ENCODE measurements at regions of chr12 and their contacts with region 1.

Region 1: DNA sequence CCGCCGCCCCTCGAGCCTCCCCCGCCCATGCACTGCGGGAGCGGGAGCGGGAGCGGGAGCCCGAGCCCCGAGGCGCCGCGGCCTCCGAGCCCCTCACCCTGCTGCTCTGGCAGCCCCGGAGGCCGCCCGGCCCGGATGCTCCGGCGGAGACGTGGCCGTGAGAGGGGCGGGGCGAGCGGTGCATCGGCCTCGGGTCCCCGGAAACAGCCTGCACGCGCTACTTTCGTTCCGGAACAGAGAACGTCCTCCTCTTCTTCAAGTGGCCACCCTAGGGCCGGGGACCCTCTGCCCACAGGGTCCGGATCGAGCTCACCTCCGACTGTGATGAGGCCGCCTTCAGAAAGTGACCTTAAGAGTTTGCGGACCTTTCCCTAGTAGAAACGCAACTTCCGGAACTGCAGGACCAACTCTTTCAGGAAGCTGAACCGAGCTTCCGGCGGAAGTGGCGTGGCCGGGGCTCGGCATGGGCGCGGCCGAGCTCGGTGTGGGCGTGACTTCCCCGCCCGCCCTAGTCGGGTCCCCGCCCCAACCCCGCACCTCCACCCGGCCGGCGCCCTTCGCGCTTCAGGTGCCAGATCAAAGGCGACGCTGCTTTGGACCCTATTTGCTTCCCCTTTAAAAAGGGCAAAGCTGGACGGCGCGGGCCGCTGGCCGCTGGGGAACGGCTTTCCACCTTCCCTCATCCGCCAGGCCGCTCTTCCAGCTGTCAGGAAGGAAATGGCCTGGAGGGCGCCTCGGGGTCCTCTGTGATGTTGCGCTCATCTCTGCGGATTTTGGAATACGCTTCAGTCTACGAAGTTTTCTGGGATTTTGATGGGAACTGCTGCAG is at the start of gene GOLGA3:
- DNase-seq: peak; percentile 92 to 97 (median 96)
- ATAC-seq: peak; percentile 88 to 93
- H3K4me3 Mint-ChIP-seq: peak within 1 kb of the TSS; percentile 94 to 99 (median 96)
- H3K27ac Mint-ChIP-seq: peak within 1 kb of the TSS; percentile 99 to 100 (median 100)
- H3K4me1 Mint-ChIP-seq: peaks cover 24 to 73% (median 62%) of the 10 kb centered on the region in 4 donors
- H3K27me3 Mint-ChIP-seq: peaks cover 0 to 3% (median 0%) of the 10 kb centered on the region in 5 donors
- polyA plus RNA-seq, gene GOLGA3: 2.7 to 18.1 (median 12.2) TPM

Region 2: DNA sequence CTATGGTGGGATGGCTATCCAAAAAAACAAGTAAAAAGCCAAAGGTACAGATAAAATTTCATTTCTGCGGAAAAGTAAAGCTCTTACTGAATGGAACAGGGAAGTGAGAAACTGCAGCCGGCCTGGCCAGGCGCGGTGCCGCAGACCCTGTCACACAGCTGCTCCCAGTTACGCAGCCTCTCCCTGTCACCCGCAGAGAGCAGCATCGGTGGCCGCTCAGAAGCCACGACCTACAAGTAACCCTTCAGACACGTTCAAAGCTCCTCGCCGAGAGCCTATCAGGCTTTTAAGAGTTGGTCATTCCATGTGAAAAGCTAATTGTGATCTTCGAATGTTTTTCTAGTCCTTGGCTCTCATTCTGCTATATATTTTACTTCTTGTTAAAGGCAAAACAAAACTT is 56.3 kb before region 1 on chr12:
- POLR2A ChIA-PET with region 1: interaction called, 12 read pairs
- DNase-seq: no peak
- ATAC-seq: no peak
- H3K4me3 Mint-ChIP-seq: peak overlapping the region in 5 of 10 donors; percentile 12 to 56 (median 39)
- H3K27ac Mint-ChIP-seq: peak overlapping the region in 7 of 10 donors; percentile 39 to 75 (median 65)
- H3K4me1 Mint-ChIP-seq: peaks cover 30 to 79% (median 65%) of the 10 kb centered on the region in 4 donors
- H3K27me3 Mint-ChIP-seq: no peaks in the 10 kb centered on the region

Region 3: GRCh38 chr12:132866251-132866828 is 37.4 kb after region 1 on chr12:
- POLR2A ChIA-PET with region 1: interaction called, 32 read pairs
- DNase-seq: no peak
- ATAC-seq: no peak
- H3K4me3 Mint-ChIP-seq: peak overlapping the region in 7 of 10 donors; percentile 20 to 77 (median 70)
- H3K27ac Mint-ChIP-seq: peak overlapping the region; percentile 65 to 98 (median 94)
- H3K4me1 Mint-ChIP-seq: peaks cover 12 to 39% (median 19%) of the 10 kb centered on the region in 4 donors
- H3K27me3 Mint-ChIP-seq: no peaks in the 10 kb centered on the region

Region 4: GRCh38 chr12:132887513-132888351 is 58.8 kb after region 1 on chr12 and contains the start of gene CHFR:
- POLR2A ChIA-PET with region 1: interaction called, 21 read pairs
- DNase-seq: peak; percentile 88 to 97 (median 92)
- ATAC-seq: peak; percentile 96 to 97
- H3K4me3 Mint-ChIP-seq: peak within 1 kb of the TSS; percentile 97 to 99 (median 98)
- H3K27ac Mint-ChIP-seq: peak within 1 kb of the TSS; percentile 99 to 100 (median 100)
- H3K4me1 Mint-ChIP-seq: peaks cover 14 to 39% (median 29%) of the 10 kb centered on the region in 4 donors
- H3K27me3 Mint-ChIP-seq: no peaks in the 10 kb centered on the region
- polyA plus RNA-seq, gene CHFR: 25.1 to 37.4 (median 27.6) TPM

Region 5: GRCh38 chr12:132956011-132956788 is 127.3 kb after region 1 on chr12 and contains the start of gene ZNF605:
- POLR2A ChIA-PET with region 1: interaction called, 12 read pairs
- DNase-seq: peak; percentile 78 to 90 (median 86)
- ATAC-seq: peak; percentile 93 to 96
- H3K4me3 Mint-ChIP-seq: peak within 1 kb of the TSS; percentile 92 to 98 (median 97)
- H3K27ac Mint-ChIP-seq: peak within 1 kb of the TSS; percentile 89 to 97 (median 95)
- H3K4me1 Mint-ChIP-seq: peaks cover 26 to 47% (median 39%) of the 10 kb centered on the region in 4 donors
- H3K27me3 Mint-ChIP-seq: no peaks in the 10 kb centered on the region
- polyA plus RNA-seq, gene ZNF605: 0.46 to 0.72 (median 0.65) TPM